ENCODE measurements at regions of chr7 and their contacts with region 1.

Region 1: DNA sequence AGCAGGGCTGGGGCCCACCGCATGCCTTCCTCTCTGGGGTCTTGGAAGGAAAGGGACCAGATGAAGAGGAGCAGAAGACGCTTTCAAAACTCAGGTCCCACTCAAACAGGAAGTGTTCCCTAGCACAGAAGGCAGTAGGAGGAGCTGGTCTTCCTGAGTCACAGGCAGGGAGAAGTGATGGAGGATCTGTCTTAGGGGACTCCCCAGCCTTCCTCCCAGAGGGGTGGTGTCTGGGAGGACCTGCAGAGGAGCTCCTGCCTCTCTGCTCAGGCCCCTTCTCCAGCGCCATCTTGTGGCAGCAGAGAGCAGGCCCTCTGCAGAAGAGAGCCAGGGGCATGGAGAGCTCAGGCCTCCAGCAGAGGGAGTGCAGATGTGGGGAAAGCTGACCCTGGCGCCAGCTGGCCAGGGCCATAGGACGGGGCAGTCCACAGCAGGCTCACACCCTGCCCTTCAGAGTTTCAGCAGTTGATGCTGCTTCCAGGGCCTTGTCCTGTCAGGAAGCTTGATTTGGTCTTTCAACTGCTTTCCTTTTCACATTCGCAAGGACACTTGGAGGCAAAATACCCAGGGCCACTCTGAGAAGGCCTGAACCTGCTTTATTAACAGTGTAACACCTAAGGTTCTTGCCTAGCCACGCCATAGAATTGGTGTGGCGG is 62.2 kb upstream of the TARP start:
- DNase-seq: peak; percentile 89
- H3K4me3 ChIP-seq: no peak overlapping the region
- H3K27ac ChIP-seq: no peak overlapping the region
- H3K4me1 ChIP-seq: peaks cover under 1% of the 10 kb centered on the region
- H3K27me3 ChIP-seq: no peaks in the 10 kb centered on the region

Region 2: GRCh38 chr7:37549076-37549941 is 786.3 kb before region 1 on chr7:
- in situ Hi-C with region 1: no loop called
- DNase-seq: no peak
- H3K4me3 ChIP-seq: no peak overlapping the region
- H3K27ac ChIP-seq: no peak overlapping the region
- H3K4me1 ChIP-seq: no peaks in the 10 kb centered on the region
- H3K27me3 ChIP-seq: no peaks in the 10 kb centered on the region

Region 3: DNA sequence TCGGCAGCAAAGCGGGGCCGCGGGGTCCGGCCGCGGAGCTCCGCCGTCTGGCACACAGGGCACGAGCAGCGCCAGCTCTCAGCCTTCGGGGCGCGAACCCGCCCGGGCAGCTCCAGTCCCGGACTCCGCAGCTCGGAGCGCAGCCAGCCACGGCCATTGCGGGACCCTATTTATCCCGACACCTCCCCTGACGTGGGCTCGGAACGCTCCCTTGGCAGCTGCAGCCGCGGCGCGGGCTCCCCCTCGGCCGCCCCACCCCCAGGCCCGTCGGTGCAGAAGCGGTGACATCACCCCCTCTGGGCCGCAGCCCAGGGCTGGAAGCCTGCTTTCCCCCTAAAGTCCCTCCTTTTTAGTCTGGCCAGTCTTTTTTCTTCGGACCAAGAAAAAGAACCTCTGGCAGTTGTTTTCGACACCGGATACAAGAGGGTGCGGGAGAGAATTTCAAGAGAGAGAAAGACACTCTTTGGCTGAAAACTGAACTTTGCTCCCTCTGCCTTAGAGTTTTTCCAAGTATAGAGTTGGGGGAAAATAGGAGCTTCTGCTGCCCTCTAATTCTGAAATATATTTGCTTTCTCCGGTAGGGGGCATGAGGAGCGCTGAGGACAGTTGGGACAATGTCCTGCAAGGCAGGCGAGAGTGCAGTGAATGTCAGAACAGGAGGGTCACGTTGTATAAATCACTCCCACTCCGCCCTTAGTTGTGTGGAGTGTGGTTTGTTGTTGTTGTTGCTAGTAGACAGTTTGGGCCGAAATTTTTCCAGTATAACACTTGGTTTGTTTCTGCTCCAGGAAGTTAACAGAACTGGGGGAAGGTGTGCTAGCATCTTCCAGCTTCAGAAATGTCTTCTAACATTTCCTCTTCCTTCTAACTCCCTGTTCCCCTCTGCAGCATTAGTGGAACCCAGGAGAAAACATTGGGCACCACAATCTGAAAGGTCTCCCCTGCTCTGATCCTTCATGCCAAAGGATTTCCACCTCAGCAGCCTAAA is 418.7 kb before region 1 on chr7 and contains the start of gene SFRP4:
- in situ Hi-C with region 1: loop called (anchors 25 kb)
- DNase-seq: peak; percentile 62
- H3K4me3 ChIP-seq: peak within 1 kb of the TSS; percentile 10; the same call in 1 of the 2 replicates
- H3K27ac ChIP-seq: no peak within 1 kb of the TSS
- H3K4me1 ChIP-seq: no peaks in the 10 kb centered on the region
- H3K27me3 ChIP-seq: peaks cover 40% of the 10 kb centered on the region
- total RNA-seq, gene SFRP4: 0.13 and 0.32 TPM in 2 replicates